ENCODE measurements at regions of chr14 and their contacts with region 1.

Region 1: GRCh38 chr14:60648934-60649874 is at the start of gene SIX1:
- DNase-seq: peak; percentile 95
- ATAC-seq: peak; percentile 93
- H3K4me3 ChIP-seq: peak within 1 kb of the TSS; percentile 74
- H3K27ac ChIP-seq: peak within 1 kb of the TSS; percentile 98
- H3K4me1 ChIP-seq: peaks cover 11% of the 10 kb centered on the region
- H3K27me3 ChIP-seq: no peaks in the 10 kb centered on the region; the same call in 1 of the 2 replicates
- CTCF ChIP-seq: no peak
- POLR2A ChIP-seq: peak; percentile 79
- RAD21 ChIP-seq: no peak
- total RNA-seq, gene SIX1: 7.7 and 8.6 TPM in 2 replicates

Region 2: GRCh38 chr14:60035177-60035576 is 614.0 kb before region 1 on chr14:
- CTCF ChIA-PET with region 1: no interaction called
- POLR2A ChIA-PET with region 1: no interaction called
- dilution Hi-C with region 1: no loop called
- in situ Hi-C with region 1: no loop called
- intact Hi-C with region 1: no loop called
- DNase-seq: no peak
- ATAC-seq: no peak
- H3K4me3 ChIP-seq: no peak overlapping the region
- H3K27ac ChIP-seq: no peak overlapping the region
- H3K4me1 ChIP-seq: no peaks in the 10 kb centered on the region
- H3K27me3 ChIP-seq: no peaks in the 10 kb centered on the region
- CTCF ChIP-seq: no peak
- POLR2A ChIP-seq: no peak
- RAD21 ChIP-seq: no peak

Region 3: GRCh38 chr14:60622917-60623257 is 26.3 kb before region 1 on chr14:
- CTCF ChIA-PET with region 1: interaction called, 3 read pairs
- POLR2A ChIA-PET with region 1: no interaction called
- dilution Hi-C with region 1: no loop called
- in situ Hi-C with region 1: no loop called
- intact Hi-C with region 1: loop called (anchors 1 kb)
- DNase-seq: peak; percentile 70
- ATAC-seq: no peak
- H3K4me3 ChIP-seq: no peak overlapping the region
- H3K27ac ChIP-seq: peak overlapping the region; percentile 53; the same call in 1 of the 2 replicates
- H3K4me1 ChIP-seq: peaks cover 8% of the 10 kb centered on the region
- H3K27me3 ChIP-seq: no peaks in the 10 kb centered on the region
- CTCF ChIP-seq: no peak
- POLR2A ChIP-seq: no peak
- RAD21 ChIP-seq: no peak

Region 4: GRCh38 chr14:60724137-60724619 is 75.0 kb after region 1 on chr14 and contains the start of gene SIX4:
- CTCF ChIA-PET with region 1: no interaction called
- POLR2A ChIA-PET with region 1: no interaction called
- dilution Hi-C with region 1: no loop called
- in situ Hi-C with region 1: no loop called
- intact Hi-C with region 1: loop called (anchors 2 kb)
- DNase-seq: peak; percentile 92
- ATAC-seq: peak; percentile 81
- H3K4me3 ChIP-seq: peak within 1 kb of the TSS; percentile 71
- H3K27ac ChIP-seq: peak within 1 kb of the TSS; percentile 78
- H3K4me1 ChIP-seq: peaks cover 10% of the 10 kb centered on the region
- H3K27me3 ChIP-seq: no peaks in the 10 kb centered on the region
- CTCF ChIP-seq: no peak
- POLR2A ChIP-seq: peak; percentile 82
- RAD21 ChIP-seq: peak; percentile 6; the same call in 1 of the 2 replicates
- total RNA-seq, gene SIX4: 28.1 and 42.7 TPM in 2 replicates

Region 5: GRCh38 chr14:60980811-60981632 is 331.8 kb after region 1 on chr14 and contains the starts of genes SLC38A6 and TRMT5:
- CTCF ChIA-PET with region 1: no interaction called
- POLR2A ChIA-PET with region 1: no interaction called
- dilution Hi-C with region 1: no loop called
- in situ Hi-C with region 1: loop called (anchors 25 kb)
- intact Hi-C with region 1: loop called (anchors 2 kb)
- DNase-seq: peak; percentile 97
- ATAC-seq: peak; percentile 95
- H3K4me3 ChIP-seq: peak within 1 kb of the TSS; percentile 83
- H3K27ac ChIP-seq: peak within 1 kb of the TSS; percentile 89
- H3K4me1 ChIP-seq: no peaks in the 10 kb centered on the region; the same call in 1 of the 2 replicates
- H3K27me3 ChIP-seq: no peaks in the 10 kb centered on the region
- CTCF ChIP-seq: no peak
- POLR2A ChIP-seq: peak; percentile 83
- RAD21 ChIP-seq: peak; percentile 28
- total RNA-seq, gene SLC38A6: 18.3 and 38.9 TPM in 2 replicates
- total RNA-seq, gene TRMT5: 10.4 and 15.6 TPM in 2 replicates

Region 6: GRCh38 chr14:61103481-61104339 is 454.5 kb after region 1 on chr14:
- CTCF ChIA-PET with region 1: no interaction called
- POLR2A ChIA-PET with region 1: interaction called, 3 read pairs
- dilution Hi-C with region 1: no loop called
- in situ Hi-C with region 1: no loop called
- intact Hi-C with region 1: loop called (anchors 5 kb)
- DNase-seq: peak; percentile 99
- ATAC-seq: peak; percentile 88
- H3K4me3 ChIP-seq: no peak overlapping the region
- H3K27ac ChIP-seq: peak overlapping the region; percentile 95
- H3K4me1 ChIP-seq: peaks cover 42% of the 10 kb centered on the region
- H3K27me3 ChIP-seq: no peaks in the 10 kb centered on the region
- CTCF ChIP-seq: no peak
- POLR2A ChIP-seq: no peak
- RAD21 ChIP-seq: no peak

Region 7: GRCh38 chr14:61252369-61253063 is 603.3 kb after region 1 on chr14:
- CTCF ChIA-PET with region 1: no interaction called
- POLR2A ChIA-PET with region 1: interaction called, 6 read pairs
- dilution Hi-C with region 1: no loop called
- in situ Hi-C with region 1: no loop called
- intact Hi-C with region 1: loop called (anchors 5 kb)
- DNase-seq: peak; percentile 99
- ATAC-seq: peak; percentile 91
- H3K4me3 ChIP-seq: no peak overlapping the region
- H3K27ac ChIP-seq: peak overlapping the region; percentile 97
- H3K4me1 ChIP-seq: peaks cover 14% of the 10 kb centered on the region
- H3K27me3 ChIP-seq: no peaks in the 10 kb centered on the region
- CTCF ChIP-seq: peak; percentile 98
- POLR2A ChIP-seq: peak; percentile 78
- RAD21 ChIP-seq: peak; percentile 100